Ovary (tissue), 10 donors: ENCODE measurements at regions of chr11 and their contacts with region 1.

Region 1: GRCh38 chr11:118556758-118557157 is 9.0 kb downstream of the IFT46 start:
- DNase-seq: no peak
- H3K4me3 ChIP-seq: no peak overlapping the region
- H3K27ac ChIP-seq: no peak overlapping the region
- H3K4me1 ChIP-seq: no peaks in the 10 kb centered on the region
- H3K27me3 ChIP-seq: no peaks in the 10 kb centered on the region
- CTCF ChIP-seq: no peak
- EP300 ChIP-seq: no peak
- POLR2A ChIP-seq: no peak

Region 2: GRCh38 chr11:119266517-119267255 is 709.9 kb after region 1 on chr11:
- intact Hi-C with region 1: loop called in 1 of 4 experiments (anchors 5 kb)
- DNase-seq: no peak
- H3K4me3 ChIP-seq: no peak overlapping the region
- H3K27ac ChIP-seq: no peak overlapping the region
- H3K4me1 ChIP-seq: no peaks in the 10 kb centered on the region
- H3K27me3 ChIP-seq: no peaks in the 10 kb centered on the region
- CTCF ChIP-seq: no peak
- EP300 ChIP-seq: no peak
- POLR2A ChIP-seq: no peak